GM12878 (cell line): ENCODE measurements at regions of chr20 and their contacts with region 1.

Region 1: GRCh38 chr20:60857708-60858107 is 394.4 kb upstream of the CDH4 start:
- DNase-seq: no peak
- ATAC-seq: no peak
- H3K4me3 ChIP-seq: no peak overlapping the region
- H3K27ac ChIP-seq: no peak overlapping the region
- H3K4me1 ChIP-seq: no peaks in the 10 kb centered on the region
- H3K27me3 ChIP-seq: no peaks in the 10 kb centered on the region
- CTCF ChIP-seq: no peak
- EP300 ChIP-seq: no peak
- POLR2A ChIP-seq: no peak
- RAD21 ChIP-seq: no peak

Region 2: DNA sequence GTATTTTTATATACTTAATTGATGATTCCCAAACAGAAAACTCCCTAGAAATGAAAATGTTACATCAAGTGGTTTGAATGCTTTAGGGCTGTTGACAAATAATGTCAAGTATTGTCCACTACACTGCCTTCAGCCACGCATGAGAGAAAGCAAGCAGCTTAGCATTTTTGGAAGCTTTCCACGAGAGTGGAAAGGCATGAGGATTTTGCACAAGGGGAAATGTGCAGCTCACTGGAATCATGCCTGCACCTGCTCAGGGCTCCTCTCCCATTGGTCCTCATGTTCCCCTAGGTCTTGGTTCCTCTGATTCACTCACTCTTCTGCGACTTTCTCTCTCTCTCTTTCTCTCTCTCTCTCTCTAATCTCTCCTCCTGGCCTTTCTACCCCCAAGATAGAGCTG is 45.1 kb before region 1 on chr20:
- CTCF ChIA-PET with region 1: no interaction called
- POLR2A ChIA-PET with region 1: no interaction called
- RAD21 ChIA-PET with region 1: no interaction called
- SMC1A ChIA-PET with region 1: no interaction called
- in situ Hi-C with region 1: no loop called
- intact Hi-C with region 1: no loop called
- DNase-seq: no peak
- ATAC-seq: no peak
- H3K4me3 ChIP-seq: no peak overlapping the region
- H3K27ac ChIP-seq: no peak overlapping the region
- H3K4me1 ChIP-seq: no peaks in the 10 kb centered on the region
- H3K27me3 ChIP-seq: no peaks in the 10 kb centered on the region
- CTCF ChIP-seq: no peak
- EP300 ChIP-seq: no peak
- POLR2A ChIP-seq: no peak
- RAD21 ChIP-seq: no peak

Region 3: DNA sequence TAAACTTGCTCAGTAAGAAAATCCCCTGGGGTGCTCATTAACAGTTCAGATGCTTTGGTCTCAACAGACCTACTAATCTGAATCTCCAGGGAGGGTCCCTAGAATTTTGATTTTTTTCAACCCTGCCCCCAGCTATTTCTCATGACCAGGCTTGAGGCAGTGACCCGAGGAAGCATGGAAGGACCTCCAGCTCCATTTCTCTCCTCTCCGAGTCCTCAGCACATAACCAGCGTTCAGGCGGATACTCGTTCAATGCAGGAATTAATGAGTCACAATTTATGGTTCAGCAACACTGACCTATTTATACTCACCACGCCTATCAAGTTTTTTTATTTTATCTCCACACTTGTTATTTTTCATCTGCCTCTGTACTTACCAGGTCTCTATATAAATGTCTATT is 25.1 kb after region 1 on chr20:
- CTCF ChIA-PET with region 1: interaction called, 3 read pairs
- POLR2A ChIA-PET with region 1: no interaction called
- RAD21 ChIA-PET with region 1: interaction called, 4 read pairs
- SMC1A ChIA-PET with region 1: interaction called, 11 read pairs
- in situ Hi-C with region 1: no loop called
- intact Hi-C with region 1: no loop called
- DNase-seq: no peak
- ATAC-seq: no peak
- H3K4me3 ChIP-seq: no peak overlapping the region
- H3K27ac ChIP-seq: no peak overlapping the region
- H3K4me1 ChIP-seq: no peaks in the 10 kb centered on the region
- H3K27me3 ChIP-seq: no peaks in the 10 kb centered on the region
- CTCF ChIP-seq: no peak
- EP300 ChIP-seq: no peak
- POLR2A ChIP-seq: no peak
- RAD21 ChIP-seq: no peak